Endothelial cell of umbilical vein (primary cell): ENCODE measurements at regions of chr6 and their contacts with region 1.

Region 1: GRCh38 chr6:6547110-6547879 is 41.2 kb upstream of the LY86 start:
- DNase-seq: peak; percentile 84
- H3K4me3 ChIP-seq: peak overlapping the region in 2 of 3 experiments; percentile 10 to 21
- H3K27ac ChIP-seq: no peak overlapping the region
- H3K4me1 ChIP-seq: no peaks in the 10 kb centered on the region
- H3K27me3 ChIP-seq: peaks cover 11 to 19% of the 10 kb centered on the region in 2 experiments
- CTCF ChIP-seq: peak; percentile 87
- POLR2A ChIP-seq: no peak

Region 2: GRCh38 chr6:5398530-5398929 is 1148.8 kb before region 1 on chr6:
- CTCF ChIA-PET with region 1: interaction called, 15 read pairs
- POLR2A ChIA-PET with region 1: no interaction called
- dilution Hi-C with region 1: no loop called
- intact Hi-C with region 1: no loop called
- DNase-seq: peak; percentile 62
- H3K4me3 ChIP-seq: no peak overlapping the region
- H3K27ac ChIP-seq: no peak overlapping the region
- H3K4me1 ChIP-seq: peaks cover 2% of the 10 kb centered on the region
- H3K27me3 ChIP-seq: no peaks in the 10 kb centered on the region
- CTCF ChIP-seq: peak; percentile 26 to 27
- POLR2A ChIP-seq: no peak

Region 3: GRCh38 chr6:5626727-5627426 is 920.4 kb before region 1 on chr6:
- CTCF ChIA-PET with region 1: no interaction called
- POLR2A ChIA-PET with region 1: no interaction called
- dilution Hi-C with region 1: no loop called
- intact Hi-C with region 1: loop called (anchors 10 kb)
- DNase-seq: no peak
- H3K4me3 ChIP-seq: no peak overlapping the region
- H3K27ac ChIP-seq: no peak overlapping the region
- H3K4me1 ChIP-seq: peaks cover 3% of the 10 kb centered on the region
- H3K27me3 ChIP-seq: no peaks in the 10 kb centered on the region
- CTCF ChIP-seq: no peak
- POLR2A ChIP-seq: no peak

Region 4: GRCh38 chr6:6008648-6009421 is 538.5 kb before region 1 on chr6:
- CTCF ChIA-PET with region 1: no interaction called
- POLR2A ChIA-PET with region 1: no interaction called
- dilution Hi-C with region 1: no loop called
- intact Hi-C with region 1: loop called (anchors 5 kb)
- DNase-seq: peak; percentile 86
- H3K4me3 ChIP-seq: peak overlapping the region; percentile 21 to 86 (median 43)
- H3K27ac ChIP-seq: no peak overlapping the region
- H3K4me1 ChIP-seq: peaks cover 21% of the 10 kb centered on the region
- H3K27me3 ChIP-seq: peaks cover 34 to 57% of the 10 kb centered on the region in 2 experiments
- CTCF ChIP-seq: no peak
- POLR2A ChIP-seq: no peak

Region 5: GRCh38 chr6:6131492-6132109 is 415.7 kb before region 1 on chr6:
- CTCF ChIA-PET with region 1: interaction called, 4 read pairs
- POLR2A ChIA-PET with region 1: no interaction called
- dilution Hi-C with region 1: no loop called
- intact Hi-C with region 1: loop called (anchors 1 kb)
- DNase-seq: peak; percentile 6
- H3K4me3 ChIP-seq: no peak overlapping the region
- H3K27ac ChIP-seq: no peak overlapping the region
- H3K4me1 ChIP-seq: no peaks in the 10 kb centered on the region
- H3K27me3 ChIP-seq: no peaks in the 10 kb centered on the region
- CTCF ChIP-seq: peak in 1 of 2 donors; percentile 10
- POLR2A ChIP-seq: no peak

Region 6: GRCh38 chr6:6466967-6467761 is 80.1 kb before region 1 on chr6:
- CTCF ChIA-PET with region 1: no interaction called
- POLR2A ChIA-PET with region 1: no interaction called
- dilution Hi-C with region 1: no loop called
- intact Hi-C with region 1: no loop called
- DNase-seq: no peak
- H3K4me3 ChIP-seq: no peak overlapping the region
- H3K27ac ChIP-seq: no peak overlapping the region
- H3K4me1 ChIP-seq: no peaks in the 10 kb centered on the region
- H3K27me3 ChIP-seq: no peaks in the 10 kb centered on the region
- CTCF ChIP-seq: no peak
- POLR2A ChIP-seq: no peak